SK-N-SH (cell line): ENCODE measurements at regions of chr1 and their contacts with region 1.

Region 1: DNA sequence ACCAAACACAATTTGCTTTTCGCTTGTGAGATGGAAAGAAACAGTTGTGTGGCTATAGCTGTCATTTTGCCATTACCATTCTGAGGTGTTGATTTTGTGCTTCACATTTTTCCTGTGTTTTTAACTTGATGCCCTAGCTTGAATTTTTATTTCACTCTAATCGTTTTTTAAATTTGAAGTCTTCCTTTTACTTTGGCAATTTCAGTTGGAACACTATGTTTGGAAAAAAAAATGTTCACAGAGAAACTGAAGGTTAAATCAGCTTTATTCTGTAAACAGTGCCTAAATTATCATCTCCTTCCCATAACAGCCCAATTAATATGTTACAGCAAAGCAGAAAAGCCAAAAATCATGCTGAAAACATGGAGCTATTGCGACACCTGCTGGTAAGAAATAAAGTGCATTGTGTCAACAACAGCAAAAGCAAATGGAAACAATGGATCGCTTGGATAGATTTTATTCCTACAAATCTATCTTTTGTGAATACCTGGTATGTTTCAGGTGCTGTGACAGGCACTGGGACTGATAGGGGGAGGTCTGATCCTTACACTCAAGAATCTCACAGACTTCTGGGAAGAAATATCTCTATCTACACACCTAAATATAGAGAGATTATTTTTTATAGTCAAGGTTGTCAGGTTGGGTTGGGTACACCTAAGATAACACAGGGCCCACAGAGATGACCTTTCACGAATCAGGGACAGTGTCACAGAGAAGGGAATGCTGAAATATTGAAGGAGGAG is 16.2 kb upstream of the ERICH3 start:
- DNase-seq: peak; percentile 25
- H3K4me3 ChIP-seq: peak overlapping the region in 1 of 2 experiments; percentile 20; a peak in 1 of 4 replicates
- H3K27ac ChIP-seq: no peak overlapping the region
- H3K4me1 ChIP-seq: no peaks in the 10 kb centered on the region; a peak in 2 of 4 replicates
- H3K27me3 ChIP-seq: no peaks in the 10 kb centered on the region
- CTCF ChIP-seq: peak; percentile 91
- EP300 ChIP-seq: no peak
- RAD21 ChIP-seq: peak; percentile 97

Region 2: GRCh38 chr1:73839922-73840321 is 849.9 kb before region 1 on chr1:
- CTCF ChIA-PET with region 1: interaction called, 10 read pairs
- POLR2A ChIA-PET with region 1: no interaction called
- DNase-seq: no peak
- H3K4me3 ChIP-seq: no peak overlapping the region
- H3K27ac ChIP-seq: no peak overlapping the region
- H3K4me1 ChIP-seq: no peaks in the 10 kb centered on the region
- H3K27me3 ChIP-seq: no peaks in the 10 kb centered on the region
- CTCF ChIP-seq: peak; percentile 64
- EP300 ChIP-seq: no peak
- RAD21 ChIP-seq: peak; percentile 67

Region 3: GRCh38 chr1:74396933-74397332 is 292.9 kb before region 1 on chr1:
- CTCF ChIA-PET with region 1: no interaction called
- POLR2A ChIA-PET with region 1: no interaction called
- DNase-seq: no peak
- H3K4me3 ChIP-seq: no peak overlapping the region
- H3K27ac ChIP-seq: no peak overlapping the region
- H3K4me1 ChIP-seq: peaks cover 0 to 20% of the 10 kb centered on the region in 2 experiments; a peak in 2 of 4 replicates
- H3K27me3 ChIP-seq: no peaks in the 10 kb centered on the region
- CTCF ChIP-seq: no peak
- EP300 ChIP-seq: no peak
- RAD21 ChIP-seq: no peak

Region 4: DNA sequence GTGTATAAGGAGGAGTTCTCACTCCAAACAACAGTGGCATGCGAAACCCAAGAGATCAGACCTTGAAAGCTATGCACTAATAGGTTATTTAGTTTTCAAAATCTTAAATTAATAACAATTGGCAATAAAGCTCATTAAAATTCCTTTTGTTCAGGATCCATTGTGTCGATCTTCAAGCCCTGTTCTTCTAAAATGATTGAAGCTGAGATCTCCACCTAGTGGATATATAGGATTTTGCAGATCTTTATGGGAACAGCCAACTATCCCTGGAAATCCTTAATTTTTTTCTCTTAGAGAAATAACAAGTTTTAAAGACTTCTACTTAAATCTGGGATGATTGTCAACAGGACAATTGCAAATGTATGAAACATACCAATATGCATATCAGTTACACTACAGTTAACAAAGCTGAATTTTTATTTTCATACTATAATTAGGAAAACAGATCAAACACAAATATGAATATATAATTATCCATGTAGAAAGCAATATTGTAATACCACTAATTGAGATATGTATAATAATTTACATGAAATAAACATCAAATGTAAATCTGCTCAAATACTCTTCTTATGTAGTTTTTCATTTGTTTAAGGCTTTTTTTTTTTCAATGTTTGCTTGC is 220.7 kb before region 1 on chr1:
- CTCF ChIA-PET with region 1: interaction called, 22 read pairs
- POLR2A ChIA-PET with region 1: no interaction called
- DNase-seq: peak; percentile 66
- H3K4me3 ChIP-seq: peak overlapping the region in 1 of 2 experiments; percentile 41; a peak in 1 of 4 replicates
- H3K27ac ChIP-seq: no peak overlapping the region
- H3K4me1 ChIP-seq: no peaks in the 10 kb centered on the region
- H3K27me3 ChIP-seq: no peaks in the 10 kb centered on the region
- CTCF ChIP-seq: peak; percentile 75
- EP300 ChIP-seq: no peak
- RAD21 ChIP-seq: peak; percentile 89

Region 5: GRCh38 chr1:74592580-74593355 is 97.0 kb before region 1 on chr1:
- CTCF ChIA-PET with region 1: interaction called, 10 read pairs
- POLR2A ChIA-PET with region 1: no interaction called
- DNase-seq: no peak
- H3K4me3 ChIP-seq: no peak overlapping the region
- H3K27ac ChIP-seq: peak overlapping the region in 1 of 2 experiments; percentile 93; a peak in 1 of 4 replicates
- H3K4me1 ChIP-seq: peaks cover 0 to 25% of the 10 kb centered on the region in 2 experiments; a peak in 2 of 4 replicates
- H3K27me3 ChIP-seq: no peaks in the 10 kb centered on the region; the same call in 1 of the 2 replicates
- CTCF ChIP-seq: no peak
- EP300 ChIP-seq: no peak
- RAD21 ChIP-seq: no peak

Region 6: DNA sequence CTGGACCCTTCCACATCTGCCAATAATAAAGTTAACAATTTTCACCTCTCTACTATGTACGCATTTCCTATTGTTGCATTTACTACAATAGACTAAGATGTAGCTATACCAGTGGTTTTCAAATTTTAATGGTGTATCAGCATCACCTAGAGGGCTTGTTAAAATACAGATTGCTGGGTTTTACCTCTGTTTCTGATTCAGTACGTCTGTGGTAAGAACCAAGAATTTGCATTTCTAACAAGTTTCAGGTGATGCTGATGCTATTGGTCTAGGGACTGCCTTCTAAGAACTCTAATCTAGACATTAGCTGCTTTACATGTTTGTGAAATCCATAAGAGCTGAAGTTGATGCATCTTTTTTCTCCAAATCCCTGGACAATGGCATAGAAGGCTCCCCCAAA is 75.9 kb before region 1 on chr1:
- CTCF ChIA-PET with region 1: interaction called, 15 read pairs
- POLR2A ChIA-PET with region 1: no interaction called
- DNase-seq: no peak
- H3K4me3 ChIP-seq: no peak overlapping the region
- H3K27ac ChIP-seq: no peak overlapping the region
- H3K4me1 ChIP-seq: peaks cover 0 to 18% of the 10 kb centered on the region in 2 experiments; a peak in 2 of 4 replicates
- H3K27me3 ChIP-seq: no peaks in the 10 kb centered on the region
- CTCF ChIP-seq: no peak
- EP300 ChIP-seq: no peak
- RAD21 ChIP-seq: no peak; the same call in 1 of the 2 replicates

Region 7: DNA sequence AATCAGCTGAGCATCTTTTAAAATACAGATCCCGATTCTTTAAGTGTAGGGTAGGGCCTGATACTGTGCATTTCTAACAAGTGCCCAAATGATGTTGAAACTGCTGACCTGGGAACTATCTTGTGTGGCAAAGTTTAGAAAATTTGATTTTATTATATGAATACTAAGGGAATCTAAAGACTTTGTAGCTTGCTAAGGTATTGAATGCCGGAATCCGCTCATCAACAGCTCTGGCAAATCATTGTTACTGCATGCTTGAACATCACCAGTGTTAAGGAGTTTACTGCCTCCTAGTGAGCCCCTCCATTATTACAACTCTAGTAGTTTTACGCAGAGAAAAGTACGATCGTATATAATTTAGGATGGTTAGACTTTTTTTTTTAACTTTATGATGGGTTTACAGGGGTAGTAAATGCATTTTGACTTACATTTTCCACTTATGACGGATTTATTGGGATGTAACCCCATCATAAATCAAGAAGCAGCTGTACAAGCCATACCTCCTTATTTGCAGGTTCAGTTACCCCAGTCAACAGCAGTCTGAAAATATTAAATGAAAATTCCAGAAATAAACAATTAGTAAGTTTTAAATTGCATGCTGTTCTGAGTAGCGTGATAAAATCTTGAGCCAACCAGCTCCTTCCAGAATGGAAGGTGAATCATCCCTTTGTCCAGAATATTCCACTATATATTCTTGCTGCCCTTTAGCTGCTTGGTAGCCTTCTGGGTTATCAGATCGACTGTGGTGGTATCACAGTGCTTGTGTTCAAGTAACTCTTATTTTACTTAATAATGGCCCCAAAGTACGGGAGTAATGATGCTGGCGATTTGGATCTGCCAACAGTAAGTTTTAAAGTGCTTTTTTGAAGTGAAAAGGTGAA is 44.1 kb after region 1 on chr1:
- CTCF ChIA-PET with region 1: interaction called, 13 read pairs
- POLR2A ChIA-PET with region 1: no interaction called
- DNase-seq: peak; percentile 60
- H3K4me3 ChIP-seq: peak overlapping the region; percentile 91 to 95
- H3K27ac ChIP-seq: peak overlapping the region; percentile 86 to 98
- H3K4me1 ChIP-seq: peaks cover 12 to 24% of the 10 kb centered on the region in 2 experiments
- H3K27me3 ChIP-seq: no peaks in the 10 kb centered on the region
- CTCF ChIP-seq: peak; percentile 78
- EP300 ChIP-seq: no peak
- RAD21 ChIP-seq: peak; percentile 72